CD14-positive monocyte (primary cell): ENCODE measurements at regions of chr4 and their contacts with region 1.

Region 1: GRCh38 chr4:83110223-83110945 is 4.1 kb downstream of the PLAC8 start:
- DNase-seq: peak; percentile 75 to 88 (median 84)
- H3K4me3 ChIP-seq: peak overlapping the region; percentile 85 to 95 (median 90)
- H3K4me3 Mint-ChIP-seq: peak overlapping the region; percentile 92 to 95
- H3K27ac ChIP-seq: peak overlapping the region; percentile 87 to 88
- H3K27ac Mint-ChIP-seq: peak overlapping the region; percentile 86 to 96 (median 94)
- H3K4me1 ChIP-seq: peaks cover 52 to 64% of the 10 kb centered on the region in 2 donors
- H3K4me1 Mint-ChIP-seq: peaks cover 53% of the 10 kb centered on the region
- H3K27me3 ChIP-seq: no peaks in the 10 kb centered on the region
- H3K27me3 Mint-ChIP-seq: no peaks in the 10 kb centered on the region
- CTCF ChIP-seq: peak; percentile 78

Region 2: GRCh38 chr4:83125738-83126141 is 15.4 kb after region 1 on chr4:
- intact Hi-C with region 1: loop called in 1 of 2 experiments (anchors 2 kb)
- DNase-seq: peak in 2 of 3 donors; percentile 63
- H3K4me3 ChIP-seq: peak overlapping the region in 1 of 3 experiments; percentile 40
- H3K4me3 Mint-ChIP-seq: peak overlapping the region in 1 of 2 donors; percentile 51
- H3K27ac ChIP-seq: peak overlapping the region; percentile 56 to 64
- H3K27ac Mint-ChIP-seq: peak overlapping the region; percentile 86 to 92 (median 88)
- H3K4me1 ChIP-seq: peaks cover 67 to 79% of the 10 kb centered on the region in 2 donors
- H3K4me1 Mint-ChIP-seq: peaks cover 64% of the 10 kb centered on the region
- H3K27me3 ChIP-seq: no peaks in the 10 kb centered on the region
- H3K27me3 Mint-ChIP-seq: peaks cover 0 to 9% (median 0%) of the 10 kb centered on the region in 3 donors
- CTCF ChIP-seq: no peak

Region 3: GRCh38 chr4:83197555-83198235 is 87.3 kb after region 1 on chr4:
- intact Hi-C with region 1: loop called in 1 of 2 experiments (anchors 5 kb)
- DNase-seq: peak; percentile 74 to 96 (median 93)
- H3K4me3 ChIP-seq: peak overlapping the region in 2 of 3 experiments; percentile 29 to 60
- H3K4me3 Mint-ChIP-seq: peak overlapping the region in 1 of 2 donors; percentile 71
- H3K27ac ChIP-seq: peak overlapping the region; percentile 54 to 79
- H3K27ac Mint-ChIP-seq: peak overlapping the region; percentile 82 to 96 (median 91)
- H3K4me1 ChIP-seq: peaks cover 69 to 70% of the 10 kb centered on the region in 2 donors
- H3K4me1 Mint-ChIP-seq: peaks cover 60% of the 10 kb centered on the region
- H3K27me3 ChIP-seq: no peaks in the 10 kb centered on the region
- H3K27me3 Mint-ChIP-seq: no peaks in the 10 kb centered on the region
- CTCF ChIP-seq: no peak

Region 4: GRCh38 chr4:83252782-83253405 is 142.5 kb after region 1 on chr4:
- intact Hi-C with region 1: loop called in 1 of 2 experiments (anchors 2 kb)
- DNase-seq: peak; percentile 56 to 74 (median 67)
- H3K4me3 ChIP-seq: peak overlapping the region in 1 of 3 experiments; percentile 2
- H3K4me3 Mint-ChIP-seq: no peak overlapping the region
- H3K27ac ChIP-seq: peak overlapping the region in 1 of 2 donors; percentile 72
- H3K27ac Mint-ChIP-seq: peak overlapping the region in 2 of 7 donors; percentile 78 to 79
- H3K4me1 ChIP-seq: peaks cover 42 to 46% of the 10 kb centered on the region in 2 donors
- H3K4me1 Mint-ChIP-seq: peaks cover 53% of the 10 kb centered on the region
- H3K27me3 ChIP-seq: no peaks in the 10 kb centered on the region
- H3K27me3 Mint-ChIP-seq: no peaks in the 10 kb centered on the region
- CTCF ChIP-seq: peak; percentile 78

Region 5: DNA sequence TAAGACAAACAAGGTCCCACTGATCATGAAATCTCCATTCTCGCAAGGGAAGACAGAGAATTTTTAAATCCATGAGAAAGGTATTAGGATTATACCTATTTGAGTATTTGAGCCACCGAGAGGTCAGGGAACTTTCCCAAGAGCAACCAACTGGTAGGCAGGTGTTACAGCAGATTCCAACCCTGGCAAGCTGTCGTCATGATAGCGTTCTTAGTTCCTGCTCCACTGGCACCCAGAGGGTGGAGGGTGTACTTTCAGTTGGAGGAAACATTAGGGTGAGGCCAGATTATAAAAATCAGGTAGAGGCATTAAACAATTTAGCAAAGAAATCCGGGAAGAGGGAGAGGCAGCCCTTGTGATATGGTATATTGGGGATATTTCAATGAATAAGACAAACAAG is 150.9 kb after region 1 on chr4:
- intact Hi-C with region 1: loop called in 1 of 2 experiments (anchors 5 kb)
- DNase-seq: no peak
- H3K4me3 ChIP-seq: no peak overlapping the region
- H3K4me3 Mint-ChIP-seq: no peak overlapping the region
- H3K27ac ChIP-seq: no peak overlapping the region
- H3K27ac Mint-ChIP-seq: peak overlapping the region in 1 of 7 donors; percentile 46
- H3K4me1 ChIP-seq: peaks cover 8 to 9% of the 10 kb centered on the region in 2 donors
- H3K4me1 Mint-ChIP-seq: peaks cover 25% of the 10 kb centered on the region
- H3K27me3 ChIP-seq: no peaks in the 10 kb centered on the region
- H3K27me3 Mint-ChIP-seq: no peaks in the 10 kb centered on the region
- CTCF ChIP-seq: no peak